ENCODE measurements at regions of chr1 and their contacts with region 1.

Region 1: GRCh38 chr1:202710070-202711045 is at the start of gene SYT2:
- DNase-seq: no peak
- ATAC-seq: peak; percentile 84
- H3K4me3 ChIP-seq: peak within 1 kb of the TSS; percentile 19 to 60 (median 23); a peak in 3 of 6 replicates
- H3K27ac ChIP-seq: no peak within 1 kb of the TSS
- H3K4me1 ChIP-seq: 0 out of 2 replicates have a peak, but pooled peaks cover 8% of the 10 kb centered on the region
- H3K27me3 ChIP-seq: peaks cover 21 to 76% of the 10 kb centered on the region in 2 experiments
- CTCF ChIP-seq: no peak
- EP300 ChIP-seq: no peak
- POLR2A ChIP-seq: no peak
- RAD21 ChIP-seq: no peak
- total RNA-seq, gene SYT2: not detected in 2 replicates

Region 2: GRCh38 chr1:202192770-202193613 is 517.4 kb before region 1 on chr1:
- CTCF ChIA-PET with region 1: no interaction called
- POLR2A ChIA-PET with region 1: no interaction called
- in situ Hi-C with region 1: loop called (anchors 10 kb)
- intact Hi-C with region 1: no loop called
- DNase-seq: peak; percentile 43
- ATAC-seq: peak; percentile 30
- H3K4me3 ChIP-seq: no peak overlapping the region; a peak in 1 of 6 replicates
- H3K27ac ChIP-seq: no peak overlapping the region
- H3K4me1 ChIP-seq: peaks cover 41% of the 10 kb centered on the region
- H3K27me3 ChIP-seq: peaks cover 11 to 24% of the 10 kb centered on the region in 2 experiments
- CTCF ChIP-seq: peak; percentile 92
- EP300 ChIP-seq: no peak
- POLR2A ChIP-seq: no peak
- RAD21 ChIP-seq: peak; percentile 76

Region 3: GRCh38 chr1:202348509-202349205 is 361.7 kb before region 1 on chr1 and contains the start of gene PPP1R12B:
- CTCF ChIA-PET with region 1: no interaction called
- POLR2A ChIA-PET with region 1: no interaction called
- in situ Hi-C with region 1: no loop called
- intact Hi-C with region 1: loop called (anchors 10 kb)
- DNase-seq: peak; percentile 98
- ATAC-seq: peak; percentile 98
- H3K4me3 ChIP-seq: peak within 1 kb of the TSS; percentile 71 to 88 (median 84)
- H3K27ac ChIP-seq: peak within 1 kb of the TSS; percentile 87
- H3K4me1 ChIP-seq: peaks cover 54% of the 10 kb centered on the region
- H3K27me3 ChIP-seq: no peaks in the 10 kb centered on the region; a peak in 1 of 5 replicates
- CTCF ChIP-seq: 0 out of 2 replicates have a peak, but pooled peaks have one; percentile 2
- EP300 ChIP-seq: peak in 1 of 2 experiments; percentile 55; a peak in 2 of 4 replicates
- POLR2A ChIP-seq: peak; percentile 63 to 74
- RAD21 ChIP-seq: peak; percentile 27
- total RNA-seq, gene PPP1R12B: 5.0 and 12.0 TPM in 2 replicates

Region 4: GRCh38 chr1:202462342-202463076 is 247.8 kb before region 1 on chr1:
- CTCF ChIA-PET with region 1: no interaction called
- POLR2A ChIA-PET with region 1: no interaction called
- in situ Hi-C with region 1: no loop called
- intact Hi-C with region 1: loop called (anchors 10 kb)
- DNase-seq: no peak
- ATAC-seq: no peak
- H3K4me3 ChIP-seq: no peak overlapping the region
- H3K27ac ChIP-seq: no peak overlapping the region
- H3K4me1 ChIP-seq: peaks cover 15% of the 10 kb centered on the region
- H3K27me3 ChIP-seq: no peaks in the 10 kb centered on the region
- CTCF ChIP-seq: no peak
- EP300 ChIP-seq: no peak
- POLR2A ChIP-seq: no peak
- RAD21 ChIP-seq: no peak

Region 5: GRCh38 chr1:202501281-202501680 is 209.1 kb before region 1 on chr1:
- CTCF ChIA-PET with region 1: no interaction called
- POLR2A ChIA-PET with region 1: no interaction called
- in situ Hi-C with region 1: no loop called
- intact Hi-C with region 1: loop called (anchors 10 kb)
- DNase-seq: peak; percentile 31
- ATAC-seq: peak; percentile 71
- H3K4me3 ChIP-seq: no peak overlapping the region
- H3K27ac ChIP-seq: no peak overlapping the region
- H3K4me1 ChIP-seq: no peaks in the 10 kb centered on the region
- H3K27me3 ChIP-seq: no peaks in the 10 kb centered on the region
- CTCF ChIP-seq: peak; percentile 68
- EP300 ChIP-seq: no peak
- POLR2A ChIP-seq: no peak
- RAD21 ChIP-seq: peak; percentile 44; the same call in 1 of the 2 replicates